HepG2 (cell line): ENCODE measurements at regions of chr3 and their contacts with region 1.

Region 1: DNA sequence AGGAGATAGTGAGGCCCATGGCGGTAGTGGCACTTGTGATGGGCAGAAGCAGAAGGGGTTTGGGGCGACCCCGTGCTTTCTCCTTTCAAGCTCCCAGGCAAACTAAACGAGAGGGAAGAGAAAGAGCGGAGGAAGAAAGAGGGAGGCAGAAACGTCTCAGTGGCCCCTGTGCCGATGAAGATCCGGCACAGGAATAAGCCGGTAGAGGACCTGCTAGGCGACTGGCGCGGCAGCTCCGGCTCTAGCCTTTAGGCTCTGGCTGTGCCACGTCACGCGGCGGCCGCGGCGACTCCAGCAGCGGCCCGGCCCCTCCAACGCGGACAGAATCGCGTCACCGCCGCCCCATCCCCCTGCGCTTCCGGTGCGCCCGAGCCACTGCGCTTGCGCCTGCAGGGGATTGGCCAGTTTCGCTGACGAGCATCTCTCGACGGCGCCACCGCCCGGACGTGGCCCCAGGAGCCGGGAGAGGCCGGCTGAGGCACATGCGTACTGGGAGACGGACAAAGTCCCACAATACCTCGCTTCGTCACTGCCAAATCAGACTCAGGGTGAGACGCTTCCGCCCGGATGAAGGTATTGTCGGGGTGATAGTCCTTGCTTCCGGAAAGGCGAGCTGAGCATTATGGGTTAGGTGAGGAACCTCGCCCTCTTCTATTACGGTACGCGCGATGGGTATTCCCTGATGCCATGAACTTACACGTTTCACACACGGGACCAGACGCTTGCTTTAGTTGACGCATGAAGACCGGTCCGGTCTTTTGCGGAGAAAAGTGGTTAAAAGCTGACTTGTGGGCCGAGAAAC is at the start of gene ARF4:
- DNase-seq: peak; percentile 99
- ATAC-seq: peak; percentile 92
- H3K4me3 ChIP-seq: peak within 1 kb of the TSS; percentile 94 to 97 (median 96)
- H3K27ac ChIP-seq: peak within 1 kb of the TSS; percentile 99
- H3K4me1 ChIP-seq: peaks cover 46% of the 10 kb centered on the region
- H3K27me3 ChIP-seq: no peaks in the 10 kb centered on the region; a peak in 2 of 5 replicates
- CTCF ChIP-seq: peak; percentile 69
- EP300 ChIP-seq: peak; percentile 3 to 83; a peak in 2 of 4 replicates
- POLR2A ChIP-seq: peak; percentile 93 to 99
- RAD21 ChIP-seq: peak; percentile 29; the same call in 1 of the 2 replicates
- total RNA-seq, gene ARF4: 184 and 247 TPM in 2 replicates

Region 2: DNA sequence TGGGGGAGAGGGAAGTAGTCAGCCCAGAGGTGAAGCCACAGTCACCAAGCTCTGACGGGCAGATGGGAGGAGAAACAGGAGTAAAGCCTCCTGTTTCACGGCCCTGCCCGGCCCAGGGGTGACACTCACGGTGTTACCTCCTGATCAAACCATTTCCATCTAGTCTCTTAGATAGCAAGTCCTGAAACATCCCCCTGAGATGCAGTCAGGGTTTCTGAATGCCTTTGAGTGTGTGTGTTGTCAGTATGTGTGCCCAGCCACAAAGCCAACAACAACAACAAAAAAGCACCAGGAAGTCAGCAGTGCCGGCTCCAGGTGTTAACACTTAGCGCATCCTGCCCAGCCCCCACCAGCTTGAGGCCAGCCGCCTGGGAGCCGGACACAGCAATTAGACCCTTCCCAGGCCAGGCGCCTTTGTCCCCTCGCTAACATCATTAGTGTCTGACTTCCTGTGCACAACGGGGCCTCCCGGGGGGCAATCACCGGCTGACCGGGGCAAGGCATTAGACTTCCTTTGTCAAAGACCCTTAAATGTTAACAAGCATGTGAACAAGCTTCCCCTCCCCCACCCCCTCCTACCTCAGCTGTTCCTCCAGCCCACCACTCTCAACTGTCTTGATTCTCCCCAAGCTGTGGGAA is 466.6 kb before region 1 on chr3:
- CTCF ChIA-PET with region 1: no interaction called
- POLR2A ChIA-PET with region 1: no interaction called
- in situ Hi-C with region 1: no loop called
- intact Hi-C with region 1: no loop called
- DNase-seq: no peak
- ATAC-seq: peak; percentile 46
- H3K4me3 ChIP-seq: no peak overlapping the region
- H3K27ac ChIP-seq: no peak overlapping the region
- H3K4me1 ChIP-seq: no peaks in the 10 kb centered on the region
- H3K27me3 ChIP-seq: peaks cover 1 to 44% of the 10 kb centered on the region in 2 experiments; a peak in 3 of 5 replicates
- CTCF ChIP-seq: no peak
- EP300 ChIP-seq: no peak
- POLR2A ChIP-seq: no peak
- RAD21 ChIP-seq: no peak

Region 3: DNA sequence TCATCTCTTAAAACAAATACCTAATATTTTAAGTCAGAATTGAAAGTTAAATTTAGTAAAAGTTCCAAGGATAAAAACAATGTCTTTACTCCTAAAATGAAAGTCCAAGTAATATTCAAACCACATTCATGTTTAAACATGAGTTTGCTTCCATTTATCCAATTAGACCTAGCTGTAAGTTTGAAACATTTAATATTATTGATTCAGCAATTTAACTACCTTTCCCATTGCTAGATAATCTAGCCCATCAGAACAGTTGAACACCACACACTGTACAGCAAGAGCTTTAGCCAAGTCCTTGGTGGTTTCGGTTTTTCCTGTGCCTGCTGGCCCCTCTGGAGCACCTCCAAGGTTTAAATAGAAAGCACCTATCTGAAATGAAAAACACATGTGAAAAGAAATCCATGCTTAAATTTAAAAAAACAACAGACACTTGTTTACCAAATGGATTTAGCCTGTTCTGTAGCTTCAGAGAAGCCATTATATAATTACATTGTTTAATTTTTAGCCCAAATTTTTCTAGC is 150.9 kb before region 1 on chr3:
- CTCF ChIA-PET with region 1: no interaction called
- POLR2A ChIA-PET with region 1: interaction called, 6 read pairs
- in situ Hi-C with region 1: no loop called
- intact Hi-C with region 1: loop called (anchors 1 kb)
- DNase-seq: no peak
- ATAC-seq: no peak
- H3K4me3 ChIP-seq: no peak overlapping the region
- H3K27ac ChIP-seq: no peak overlapping the region
- H3K4me1 ChIP-seq: peaks cover 49% of the 10 kb centered on the region
- H3K27me3 ChIP-seq: no peaks in the 10 kb centered on the region; a peak in 1 of 5 replicates
- CTCF ChIP-seq: no peak
- EP300 ChIP-seq: no peak
- POLR2A ChIP-seq: no peak
- RAD21 ChIP-seq: no peak

Region 4: GRCh38 chr3:57555738-57556458 is 41.4 kb before region 1 on chr3 and contains the start of gene PDE12:
- CTCF ChIA-PET with region 1: no interaction called
- POLR2A ChIA-PET with region 1: interaction called, 36 read pairs
- in situ Hi-C with region 1: no loop called
- intact Hi-C with region 1: loop called (anchors 5 kb)
- DNase-seq: peak; percentile 88
- ATAC-seq: peak; percentile 91
- H3K4me3 ChIP-seq: peak within 1 kb of the TSS; percentile 78 to 82 (median 80)
- H3K27ac ChIP-seq: peak within 1 kb of the TSS; percentile 92
- H3K4me1 ChIP-seq: peaks cover 36% of the 10 kb centered on the region
- H3K27me3 ChIP-seq: no peaks in the 10 kb centered on the region; a peak in 1 of 5 replicates
- CTCF ChIP-seq: peak; percentile 23; the same call in 1 of the 2 replicates
- EP300 ChIP-seq: peak in 1 of 2 experiments; percentile 82; a peak in 2 of 4 replicates
- POLR2A ChIP-seq: peak; percentile 93 to 95
- RAD21 ChIP-seq: peak; percentile 34; the same call in 1 of the 2 replicates
- total RNA-seq, gene PDE12: 17.8 and 20.6 TPM in 2 replicates

Region 5: GRCh38 chr3:57826245-57826951 is 229.1 kb after region 1 on chr3:
- CTCF ChIA-PET with region 1: no interaction called
- POLR2A ChIA-PET with region 1: interaction called, 7 read pairs
- in situ Hi-C with region 1: no loop called
- intact Hi-C with region 1: loop called (anchors 10 kb)
- DNase-seq: no peak
- ATAC-seq: peak; percentile 55
- H3K4me3 ChIP-seq: no peak overlapping the region
- H3K27ac ChIP-seq: peak overlapping the region; percentile 78
- H3K4me1 ChIP-seq: peaks cover 58% of the 10 kb centered on the region
- H3K27me3 ChIP-seq: no peaks in the 10 kb centered on the region
- CTCF ChIP-seq: peak; percentile 40
- EP300 ChIP-seq: no peak
- POLR2A ChIP-seq: no peak
- RAD21 ChIP-seq: no peak